ENCODE measurements at regions of chr2 and their contacts with region 1.

Region 1: DNA sequence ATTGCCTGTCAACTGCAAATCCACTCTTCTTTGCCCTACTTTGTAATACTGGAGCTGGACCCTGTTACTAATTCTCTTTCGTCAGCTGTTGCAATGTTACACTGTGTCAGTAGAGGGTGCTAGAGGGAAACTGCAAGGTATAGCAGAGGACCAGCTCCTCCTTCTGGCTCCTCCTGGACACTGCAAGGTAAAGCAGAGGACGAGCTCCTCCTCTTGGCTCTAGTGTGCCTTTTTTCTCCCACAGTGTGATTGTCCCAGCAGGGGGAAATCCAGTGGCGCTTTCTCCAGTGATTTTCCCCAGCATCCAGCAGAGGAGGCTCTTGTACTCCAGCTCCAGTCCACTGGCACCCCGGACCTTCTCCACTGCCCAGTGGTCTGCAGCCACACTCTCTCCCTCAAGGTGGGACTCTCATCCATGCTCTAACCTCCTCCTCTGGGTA is 95.6 kb downstream of the CAPN13 start:
- DNase-seq: peak; percentile 89 to 95 (median 90)
- H3K4me3 ChIP-seq: no peak overlapping the region
- H3K27ac ChIP-seq: no peak overlapping the region
- H3K4me1 ChIP-seq: peaks cover 0 to 12% (median 5%) of the 10 kb centered on the region in 4 experiments
- H3K27me3 ChIP-seq: no peaks in the 10 kb centered on the region

Region 2: DNA sequence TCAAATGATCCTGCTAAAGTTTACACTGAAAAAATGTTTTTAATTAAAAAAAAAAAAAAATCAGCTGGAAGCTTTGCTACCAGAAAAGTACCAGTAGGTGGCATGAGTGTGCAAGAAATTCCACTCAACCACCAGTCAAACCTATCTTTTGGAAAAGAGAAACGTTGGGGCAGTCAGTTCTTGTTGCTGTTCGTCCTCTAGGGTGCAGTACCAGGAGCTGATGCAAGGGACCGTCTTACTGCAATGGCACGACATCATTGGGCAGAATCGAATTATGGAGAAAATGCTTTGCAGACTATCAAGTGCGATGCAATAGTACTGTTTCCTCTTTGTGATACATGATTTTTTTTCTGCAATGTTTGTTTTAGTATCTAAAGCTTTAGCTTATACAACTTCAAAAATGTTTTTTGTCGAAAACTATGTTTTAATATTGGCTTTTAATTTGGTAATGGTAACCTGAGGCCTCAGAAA is 546.6 kb before region 1 on chr2:
- CTCF ChIA-PET with region 1: interaction called, 312 read pairs
- POLR2A ChIA-PET with region 1: interaction called, 4 read pairs
- DNase-seq: peak; percentile 94 to 97 (median 97)
- H3K4me3 ChIP-seq: no peak overlapping the region
- H3K27ac ChIP-seq: no peak overlapping the region
- H3K4me1 ChIP-seq: peaks cover 0 to 14% (median 0%) of the 10 kb centered on the region in 4 experiments
- H3K27me3 ChIP-seq: peaks cover 0 to 2% (median 0%) of the 10 kb centered on the region in 5 experiments

Region 3: GRCh38 chr2:30225131-30225762 is 486.4 kb before region 1 on chr2:
- CTCF ChIA-PET with region 1: interaction called, 28 read pairs
- POLR2A ChIA-PET with region 1: interaction called, 3 read pairs
- DNase-seq: peak; percentile 63 to 88 (median 83)
- H3K4me3 ChIP-seq: peak overlapping the region; percentile 23 to 84 (median 64)
- H3K27ac ChIP-seq: peak overlapping the region; percentile 77 to 93
- H3K4me1 ChIP-seq: peaks cover 7 to 38% (median 34%) of the 10 kb centered on the region in 4 experiments
- H3K27me3 ChIP-seq: no peaks in the 10 kb centered on the region

Region 4: DNA sequence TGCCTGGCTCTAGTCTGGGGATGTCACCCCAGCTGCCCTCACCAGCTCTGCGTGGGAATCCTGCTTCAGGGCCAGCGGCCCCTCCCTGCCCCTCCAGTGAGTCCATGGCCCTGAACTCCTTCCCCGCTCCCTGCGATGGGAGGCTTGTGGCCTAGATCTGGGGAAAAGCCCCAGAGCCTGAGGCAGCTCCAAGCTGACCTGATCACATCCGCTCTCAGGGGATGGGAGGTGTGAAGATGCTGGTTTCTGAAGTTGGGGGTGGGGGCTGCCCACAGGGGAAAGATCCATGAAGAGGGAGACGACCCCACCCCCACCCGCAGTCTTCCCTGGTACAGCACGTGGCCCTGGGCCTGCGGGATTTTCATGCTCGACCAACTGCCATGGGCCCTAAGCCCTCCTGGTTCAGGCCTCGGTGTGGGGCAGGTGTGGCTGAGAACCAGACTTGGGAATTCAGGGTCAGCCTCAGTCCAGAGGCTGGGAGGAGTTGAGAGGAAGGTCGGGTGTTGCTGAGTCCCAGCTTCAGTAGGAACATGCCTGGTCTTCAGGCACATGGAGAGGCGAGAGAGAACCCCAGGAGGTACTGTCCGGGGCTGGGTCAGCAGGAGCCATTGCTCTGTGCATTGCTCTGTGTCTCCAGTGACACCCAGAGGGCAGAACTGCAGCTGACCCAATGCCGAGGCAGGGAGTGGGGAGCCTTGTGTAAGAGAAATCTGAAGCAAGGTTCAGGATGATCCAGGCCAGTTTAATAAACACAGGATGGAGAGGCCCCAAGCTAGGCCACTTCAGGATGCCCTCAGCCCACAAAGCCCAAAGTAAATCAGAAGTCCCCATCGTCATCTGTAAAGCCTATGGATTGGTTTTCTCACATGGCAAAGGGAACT is 19.5 kb before region 1 on chr2:
- CTCF ChIA-PET with region 1: interaction called, 28 read pairs
- POLR2A ChIA-PET with region 1: no interaction called
- DNase-seq: no peak
- H3K4me3 ChIP-seq: no peak overlapping the region
- H3K27ac ChIP-seq: no peak overlapping the region
- H3K4me1 ChIP-seq: no peaks in the 10 kb centered on the region
- H3K27me3 ChIP-seq: peaks cover 0 to 2% (median 0%) of the 10 kb centered on the region in 5 experiments

Region 5: DNA sequence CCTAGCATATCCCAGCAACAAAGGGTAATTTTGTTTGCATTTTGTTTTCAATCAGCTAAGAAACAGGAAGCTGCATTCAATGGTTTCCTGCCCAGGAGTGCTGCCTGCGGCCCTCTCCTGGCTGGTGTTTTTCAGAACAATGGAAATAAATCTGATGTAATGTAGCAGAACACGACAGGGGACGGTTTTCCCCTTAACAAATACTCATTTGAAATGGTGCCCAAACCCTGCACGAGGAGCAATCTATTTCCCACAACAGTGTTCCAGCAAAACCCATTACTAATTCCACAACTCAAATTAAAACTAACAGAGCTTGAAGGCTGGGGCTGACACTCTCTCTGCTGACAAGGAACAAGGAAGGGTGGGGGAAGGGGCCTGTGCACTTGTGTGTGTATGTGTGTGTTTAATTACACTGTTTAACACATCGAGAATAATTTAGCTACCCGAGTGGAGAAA is 86.9 kb after region 1 on chr2:
- CTCF ChIA-PET with region 1: interaction called, 16 read pairs
- POLR2A ChIA-PET with region 1: no interaction called
- DNase-seq: peak in 2 of 3 donors; percentile 52 to 56
- H3K4me3 ChIP-seq: no peak overlapping the region
- H3K27ac ChIP-seq: no peak overlapping the region
- H3K4me1 ChIP-seq: peaks cover 0 to 14% (median 11%) of the 10 kb centered on the region in 4 experiments
- H3K27me3 ChIP-seq: no peaks in the 10 kb centered on the region

Region 6: DNA sequence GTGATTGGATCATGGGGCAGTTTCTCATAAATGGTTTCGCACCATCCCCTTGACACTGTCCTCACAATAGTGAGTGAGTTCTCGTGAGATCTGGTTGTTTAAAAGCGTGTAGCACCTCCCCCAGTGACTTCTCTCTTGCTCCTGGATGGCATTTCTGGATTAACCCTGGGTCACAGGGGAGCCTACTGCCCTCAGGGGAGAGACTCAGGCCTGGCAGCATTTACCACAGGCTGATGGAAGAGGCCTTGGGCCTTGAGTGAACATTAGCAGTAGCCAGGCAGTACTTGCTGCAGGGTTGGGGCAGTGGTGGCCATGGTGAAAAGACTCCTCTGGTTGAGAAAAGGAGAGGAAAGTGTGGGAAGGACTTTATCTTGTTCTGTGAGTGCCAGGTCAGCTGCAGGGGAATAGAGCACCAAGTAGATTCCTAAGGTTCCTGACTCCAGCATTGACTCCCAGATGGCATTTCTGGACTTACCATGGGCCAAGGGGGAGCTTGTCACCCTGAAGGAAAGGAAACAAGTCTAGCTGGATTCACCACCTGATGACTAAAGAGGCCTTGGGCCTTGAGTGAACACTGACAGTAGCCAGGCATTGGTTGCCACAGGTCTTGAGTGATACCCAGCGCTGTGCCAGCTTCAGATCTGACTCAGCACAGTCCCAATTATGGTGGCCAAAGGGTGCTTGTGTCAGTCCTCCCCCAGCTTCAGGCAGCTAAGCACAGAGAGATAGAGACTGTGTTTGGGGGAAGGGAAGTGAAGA is 135.5 kb after region 1 on chr2:
- CTCF ChIA-PET with region 1: no interaction called
- POLR2A ChIA-PET with region 1: no interaction called
- DNase-seq: no peak
- H3K4me3 ChIP-seq: no peak overlapping the region
- H3K27ac ChIP-seq: no peak overlapping the region
- H3K4me1 ChIP-seq: no peaks in the 10 kb centered on the region
- H3K27me3 ChIP-seq: no peaks in the 10 kb centered on the region

Region 7: DNA sequence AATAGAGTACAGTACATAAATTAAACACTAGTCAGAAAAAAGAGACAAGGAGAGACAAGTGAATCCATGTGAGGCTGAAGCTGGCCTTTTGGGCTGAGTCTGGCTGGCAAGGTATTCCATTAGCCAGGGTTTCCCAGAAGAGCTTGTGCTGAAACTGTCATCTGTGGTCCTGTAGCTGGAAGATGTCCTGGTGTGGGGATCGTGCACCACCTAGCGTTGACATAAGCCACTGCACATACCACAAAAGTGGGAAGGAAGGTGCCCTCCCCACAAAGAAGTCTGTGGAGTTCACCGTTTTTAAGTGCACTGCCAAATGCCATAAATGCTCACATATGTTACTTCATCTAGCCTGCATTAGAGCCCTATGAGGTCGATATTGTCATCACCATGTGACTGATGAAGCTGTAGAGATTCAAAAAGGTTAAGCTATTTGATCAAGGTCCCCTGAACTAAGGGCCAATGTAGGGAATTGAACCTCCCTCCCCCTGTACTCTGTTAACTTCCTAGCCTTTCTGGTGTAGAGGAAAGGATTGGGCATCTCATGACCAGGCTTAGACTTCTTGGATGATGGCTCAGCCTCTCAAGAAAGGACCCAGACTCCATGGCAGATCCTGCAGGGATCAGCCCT is 458.5 kb after region 1 on chr2:
- CTCF ChIA-PET with region 1: interaction called, 60 read pairs
- POLR2A ChIA-PET with region 1: no interaction called
- DNase-seq: peak; percentile 64 to 82 (median 76)
- H3K4me3 ChIP-seq: no peak overlapping the region
- H3K27ac ChIP-seq: no peak overlapping the region
- H3K4me1 ChIP-seq: peaks cover 0 to 4% (median 2%) of the 10 kb centered on the region in 4 experiments
- H3K27me3 ChIP-seq: no peaks in the 10 kb centered on the region

Measured in common myeloid progenitor, CD34-positive (primary cell).